CD8-positive, alpha-beta memory T cell (primary cell): ENCODE measurements at regions of chr12 and their contacts with region 1.

Region 1: GRCh38 chr12:52327052-52327829 is 6.0 kb upstream of the KRT83 start:
- DNase-seq: peak; percentile 56 to 84 (median 69)
- H3K4me3 ChIP-seq: no peak overlapping the region
- H3K4me3 Mint-ChIP-seq: no peak overlapping the region
- H3K27ac ChIP-seq: no peak overlapping the region
- H3K27ac Mint-ChIP-seq: peak overlapping the region in 3 of 8 donors; percentile 13 to 92 (median 26)
- H3K4me1 ChIP-seq: peaks cover 4% of the 10 kb centered on the region
- H3K4me1 Mint-ChIP-seq: peaks cover 2 to 9% (median 8%) of the 10 kb centered on the region in 3 donors
- H3K27me3 ChIP-seq: no peaks in the 10 kb centered on the region
- H3K27me3 Mint-ChIP-seq: peaks cover 16 to 19% of the 10 kb centered on the region in 2 donors

Region 2: GRCh38 chr12:51959211-51959610 is 368.0 kb before region 1 on chr12:
- CTCF ChIA-PET with region 1: no interaction called
- POLR2A ChIA-PET with region 1: no interaction called
- DNase-seq: no peak
- H3K4me3 ChIP-seq: no peak overlapping the region
- H3K4me3 Mint-ChIP-seq: no peak overlapping the region
- H3K27ac ChIP-seq: no peak overlapping the region
- H3K27ac Mint-ChIP-seq: peak overlapping the region in 3 of 8 donors; percentile 25 to 88 (median 31)
- H3K4me1 ChIP-seq: peaks cover 14% of the 10 kb centered on the region
- H3K4me1 Mint-ChIP-seq: peaks cover 28 to 53% (median 41%) of the 10 kb centered on the region in 3 donors
- H3K27me3 ChIP-seq: no peaks in the 10 kb centered on the region
- H3K27me3 Mint-ChIP-seq: no peaks in the 10 kb centered on the region

Region 3: DNA sequence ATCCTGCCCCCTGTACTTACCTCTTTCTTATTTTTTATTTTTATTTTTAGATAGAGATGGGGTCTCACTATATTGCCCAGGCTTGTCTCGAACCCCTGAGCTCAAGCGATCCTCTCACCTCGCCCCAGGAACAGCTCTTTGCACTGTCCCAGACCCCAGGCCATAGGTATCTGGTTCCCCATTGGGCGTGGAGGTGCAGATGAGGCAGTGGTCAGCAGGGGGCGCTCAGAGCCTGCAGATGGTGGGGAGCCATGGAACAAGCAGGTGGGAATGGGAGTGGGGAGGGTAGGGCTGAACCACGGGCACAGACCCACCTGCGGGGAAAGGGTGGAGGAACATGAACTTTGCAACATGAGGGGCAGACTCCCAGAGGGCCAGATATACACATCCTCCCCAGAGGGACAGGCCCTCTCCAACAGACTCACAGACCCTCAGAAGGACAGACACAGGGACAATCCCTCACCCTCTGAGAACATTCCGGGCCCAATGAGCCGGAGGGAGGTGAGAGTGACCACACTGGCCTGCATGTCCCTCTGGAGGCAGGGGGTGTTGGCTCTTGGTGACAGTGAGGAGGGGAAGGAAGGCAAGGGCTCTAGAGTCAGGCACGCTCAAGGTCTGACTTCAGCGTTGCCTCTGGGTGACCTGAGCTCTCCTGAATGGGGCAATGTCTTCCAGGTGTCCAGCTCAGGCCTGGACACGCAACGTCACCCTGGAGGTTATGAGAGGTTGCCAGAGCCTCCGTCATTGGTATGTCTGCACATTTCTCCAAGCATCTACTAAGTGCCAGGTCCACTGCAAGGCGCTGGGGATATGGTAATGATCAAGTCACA is 170.3 kb before region 1 on chr12:
- CTCF ChIA-PET with region 1: interaction called, 21 read pairs
- POLR2A ChIA-PET with region 1: interaction called, 3 read pairs
- DNase-seq: peak; percentile 51 to 77 (median 59)
- H3K4me3 ChIP-seq: no peak overlapping the region
- H3K4me3 Mint-ChIP-seq: no peak overlapping the region
- H3K27ac ChIP-seq: no peak overlapping the region
- H3K27ac Mint-ChIP-seq: peak overlapping the region in 3 of 8 donors; percentile 45 to 91 (median 52)
- H3K4me1 ChIP-seq: peaks cover 36% of the 10 kb centered on the region
- H3K4me1 Mint-ChIP-seq: peaks cover 26 to 47% (median 35%) of the 10 kb centered on the region in 3 donors
- H3K27me3 ChIP-seq: no peaks in the 10 kb centered on the region
- H3K27me3 Mint-ChIP-seq: no peaks in the 10 kb centered on the region

Region 4: DNA sequence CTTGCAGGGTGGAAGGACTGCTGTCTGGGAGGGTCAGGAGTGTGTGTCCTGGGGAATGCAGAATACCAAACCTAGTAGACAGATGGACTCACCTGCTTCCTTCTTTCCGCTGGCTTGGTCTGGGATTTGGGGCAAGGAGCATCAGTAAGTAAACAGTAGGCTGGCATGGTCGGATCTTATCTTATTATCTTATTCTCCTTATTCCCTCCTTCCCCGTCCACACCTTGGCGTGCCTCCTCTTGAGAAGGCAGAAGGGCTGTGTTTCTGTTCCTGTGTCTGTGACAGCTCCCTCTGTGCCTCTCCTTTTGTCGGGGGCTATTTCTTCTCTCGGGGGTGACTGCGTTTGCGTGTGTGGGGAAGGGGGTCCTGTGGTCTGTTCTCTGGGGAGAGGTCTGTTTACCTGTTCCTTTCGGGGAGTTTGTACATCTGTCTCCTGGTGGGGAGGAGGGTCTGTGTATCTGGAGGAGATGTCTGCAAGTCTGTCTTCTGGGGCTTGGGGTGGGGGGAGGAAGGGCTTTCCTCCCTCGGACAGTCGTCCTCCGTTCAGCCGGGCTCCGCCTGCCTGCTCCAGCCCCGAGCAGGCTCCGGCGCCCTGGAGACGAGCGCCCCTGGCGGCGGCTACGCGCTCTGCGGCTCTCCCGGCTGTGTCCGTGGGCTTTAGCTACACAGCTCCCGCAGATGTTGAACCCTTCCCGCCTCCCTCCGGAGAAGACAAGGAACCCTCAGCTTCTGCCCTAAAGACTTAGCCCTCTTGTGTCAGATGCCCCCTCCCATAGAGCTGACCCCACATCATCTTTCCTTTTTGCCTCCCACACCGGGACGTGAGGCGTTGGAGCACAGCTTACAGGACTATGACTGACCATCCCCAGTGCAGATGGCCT is 48.5 kb before region 1 on chr12:
- CTCF ChIA-PET with region 1: interaction called, 11 read pairs
- POLR2A ChIA-PET with region 1: no interaction called
- DNase-seq: peak; percentile 47 to 71 (median 51)
- H3K4me3 ChIP-seq: no peak overlapping the region
- H3K4me3 Mint-ChIP-seq: peak overlapping the region in 2 of 7 donors; percentile 24 to 43
- H3K27ac ChIP-seq: no peak overlapping the region
- H3K27ac Mint-ChIP-seq: peak overlapping the region in 2 of 8 donors; percentile 29 to 55
- H3K4me1 ChIP-seq: peaks cover 6% of the 10 kb centered on the region
- H3K4me1 Mint-ChIP-seq: peaks cover 6 to 11% (median 10%) of the 10 kb centered on the region in 3 donors
- H3K27me3 ChIP-seq: no peaks in the 10 kb centered on the region
- H3K27me3 Mint-ChIP-seq: peaks cover 22 to 63% of the 10 kb centered on the region in 2 donors

Region 5: DNA sequence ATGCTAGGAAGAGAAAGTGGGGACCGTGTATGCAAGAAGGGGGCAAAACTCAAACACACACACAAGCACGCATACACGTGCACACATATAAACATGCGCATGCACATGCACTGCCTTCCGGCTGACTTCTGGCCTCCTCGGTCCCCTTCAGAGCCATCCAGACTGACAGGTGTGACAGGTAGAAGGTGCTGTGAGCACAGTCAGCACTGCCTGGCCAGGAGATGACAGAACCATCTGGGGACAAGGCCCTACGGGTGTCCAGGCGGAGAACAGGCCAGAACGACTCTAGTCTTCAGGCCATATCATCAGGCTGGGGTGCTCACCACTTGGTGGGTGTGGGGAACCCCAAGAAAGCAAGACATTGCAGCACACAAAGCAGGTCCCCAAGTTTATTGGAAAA is 13.3 kb before region 1 on chr12:
- CTCF ChIA-PET with region 1: interaction called, 15 read pairs
- POLR2A ChIA-PET with region 1: no interaction called
- DNase-seq: no peak
- H3K4me3 ChIP-seq: no peak overlapping the region
- H3K4me3 Mint-ChIP-seq: no peak overlapping the region
- H3K27ac ChIP-seq: no peak overlapping the region
- H3K27ac Mint-ChIP-seq: peak overlapping the region in 1 of 8 donors; percentile 5
- H3K4me1 ChIP-seq: no peaks in the 10 kb centered on the region
- H3K4me1 Mint-ChIP-seq: peaks cover under 1 to 4% (median 3%) of the 10 kb centered on the region in 3 donors
- H3K27me3 ChIP-seq: peaks cover 7% of the 10 kb centered on the region
- H3K27me3 Mint-ChIP-seq: peaks cover 13 to 62% of the 10 kb centered on the region in 2 donors

Region 6: DNA sequence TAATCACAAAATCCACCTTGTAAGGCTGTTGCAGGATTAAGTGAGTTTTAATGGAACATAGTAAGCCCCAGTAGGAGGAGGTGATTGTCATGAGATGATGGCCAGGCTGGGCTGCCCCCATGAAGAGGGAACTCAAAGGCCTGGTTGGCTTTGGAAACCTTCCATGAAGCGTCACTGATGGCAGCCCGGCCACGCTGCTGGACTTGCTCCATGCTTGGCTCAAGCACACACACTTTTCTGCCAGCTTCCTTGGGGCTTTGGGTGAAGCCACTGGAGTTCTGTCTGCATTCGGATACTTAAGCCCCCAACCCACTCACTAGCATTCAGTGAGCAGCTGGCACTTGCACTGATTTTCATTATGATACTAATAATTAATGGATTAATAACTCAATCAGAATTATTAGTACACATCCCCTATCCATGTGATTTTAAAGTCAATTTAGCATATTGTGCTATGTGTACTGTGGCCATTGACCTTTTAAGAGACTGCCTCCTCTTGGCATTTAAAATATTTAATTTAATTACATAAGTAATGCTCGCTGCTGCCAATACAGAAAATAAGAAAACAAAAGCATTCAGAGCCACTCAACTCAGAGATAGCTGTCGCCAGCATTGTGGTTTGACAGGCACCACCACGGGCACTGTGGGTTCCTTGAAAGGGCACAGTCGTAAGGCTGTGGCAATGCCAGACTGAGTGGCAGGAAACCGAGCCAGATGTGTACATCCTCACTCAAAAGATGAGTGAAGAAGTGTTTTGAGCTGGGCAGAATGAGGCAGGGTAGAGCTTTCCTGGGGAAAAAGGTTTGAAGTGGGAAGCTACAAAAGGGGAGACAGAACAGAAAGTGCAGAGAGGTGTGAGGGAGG is 24.2 kb after region 1 on chr12:
- CTCF ChIA-PET with region 1: interaction called, 16 read pairs
- POLR2A ChIA-PET with region 1: interaction called, 5 read pairs
- DNase-seq: peak; percentile 43 to 87 (median 72)
- H3K4me3 ChIP-seq: no peak overlapping the region
- H3K4me3 Mint-ChIP-seq: peak overlapping the region in 6 of 7 donors; percentile 35 to 59 (median 50)
- H3K27ac ChIP-seq: no peak overlapping the region
- H3K27ac Mint-ChIP-seq: peak overlapping the region in 7 of 8 donors; percentile 0 to 69 (median 47)
- H3K4me1 ChIP-seq: peaks cover 21% of the 10 kb centered on the region
- H3K4me1 Mint-ChIP-seq: peaks cover 26 to 53% (median 40%) of the 10 kb centered on the region in 3 donors
- H3K27me3 ChIP-seq: no peaks in the 10 kb centered on the region
- H3K27me3 Mint-ChIP-seq: peaks cover 17 to 20% of the 10 kb centered on the region in 2 donors

Region 7: DNA sequence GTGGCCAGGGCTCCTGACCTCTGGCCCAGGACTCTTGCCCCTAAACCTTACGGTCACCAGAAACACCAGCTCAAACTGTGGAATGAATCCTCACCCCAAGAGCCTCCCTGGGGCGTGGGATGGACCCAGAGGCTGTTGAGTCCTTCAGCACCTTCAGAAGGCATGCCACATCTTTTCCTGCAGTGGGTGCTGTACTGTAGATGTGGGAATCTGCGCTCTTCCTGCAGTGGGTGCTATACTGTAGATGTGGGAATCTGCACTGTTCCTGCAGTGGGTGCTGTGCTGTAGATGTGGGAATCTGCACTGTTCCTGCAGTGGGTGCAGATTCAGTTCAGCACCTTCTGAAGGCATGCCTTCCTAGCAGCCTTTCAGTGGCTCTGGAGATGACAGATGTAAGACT is 77.7 kb after region 1 on chr12:
- CTCF ChIA-PET with region 1: no interaction called
- POLR2A ChIA-PET with region 1: no interaction called
- DNase-seq: no peak
- H3K4me3 ChIP-seq: no peak overlapping the region
- H3K4me3 Mint-ChIP-seq: no peak overlapping the region
- H3K27ac ChIP-seq: no peak overlapping the region
- H3K27ac Mint-ChIP-seq: no peak overlapping the region
- H3K4me1 ChIP-seq: no peaks in the 10 kb centered on the region
- H3K4me1 Mint-ChIP-seq: no peaks in the 10 kb centered on the region
- H3K27me3 ChIP-seq: no peaks in the 10 kb centered on the region
- H3K27me3 Mint-ChIP-seq: peaks cover 3 to 31% of the 10 kb centered on the region in 2 donors

Region 8: GRCh38 chr12:52522346-52523011 is 195.2 kb after region 1 on chr12:
- CTCF ChIA-PET with region 1: no interaction called
- POLR2A ChIA-PET with region 1: no interaction called
- DNase-seq: no peak
- H3K4me3 ChIP-seq: no peak overlapping the region
- H3K4me3 Mint-ChIP-seq: no peak overlapping the region
- H3K27ac ChIP-seq: no peak overlapping the region
- H3K27ac Mint-ChIP-seq: no peak overlapping the region
- H3K4me1 ChIP-seq: peaks cover 17% of the 10 kb centered on the region
- H3K4me1 Mint-ChIP-seq: peaks cover 9 to 11% (median 11%) of the 10 kb centered on the region in 3 donors
- H3K27me3 ChIP-seq: no peaks in the 10 kb centered on the region
- H3K27me3 Mint-ChIP-seq: peaks cover 0 to 9% of the 10 kb centered on the region in 2 donors